ENCODE measurements at regions of chr4 and their contacts with region 1.

Region 1: GRCh38 chr4:38132107-38132673 is 172.0 kb downstream of the PTTG2 start:
- DNase-seq: peak; percentile 30 to 94 (median 66)
- ATAC-seq: peak; percentile 72
- H3K4me3 ChIP-seq: no peak overlapping the region
- H3K4me3 Mint-ChIP-seq: peak overlapping the region; percentile 17
- H3K27ac ChIP-seq: peak overlapping the region; percentile 25 to 66
- H3K27ac Mint-ChIP-seq: peak overlapping the region; percentile 93
- H3K4me1 ChIP-seq: peaks cover 53% of the 10 kb centered on the region
- H3K4me1 Mint-ChIP-seq: peaks cover 54% of the 10 kb centered on the region
- H3K27me3 ChIP-seq: no peaks in the 10 kb centered on the region
- H3K27me3 Mint-ChIP-seq: no peaks in the 10 kb centered on the region
- CTCF ChIP-seq: no peak

Region 2: GRCh38 chr4:38160487-38161207 is 28.5 kb after region 1 on chr4:
- CTCF ChIA-PET with region 1: no interaction called
- POLR2A ChIA-PET with region 1: no interaction called
- intact Hi-C with region 1: loop called in 1 of 2 experiments (anchors 1 kb)
- DNase-seq: peak in 4 of 9 experiments; percentile 32 to 76 (median 50)
- ATAC-seq: peak; percentile 83
- H3K4me3 ChIP-seq: no peak overlapping the region
- H3K4me3 Mint-ChIP-seq: no peak overlapping the region
- H3K27ac ChIP-seq: no peak overlapping the region
- H3K27ac Mint-ChIP-seq: no peak overlapping the region
- H3K4me1 ChIP-seq: peaks cover 2% of the 10 kb centered on the region
- H3K4me1 Mint-ChIP-seq: peaks cover 9% of the 10 kb centered on the region
- H3K27me3 ChIP-seq: no peaks in the 10 kb centered on the region
- H3K27me3 Mint-ChIP-seq: no peaks in the 10 kb centered on the region
- CTCF ChIP-seq: no peak

Region 3: GRCh38 chr4:38310446-38311043 is 178.4 kb after region 1 on chr4:
- CTCF ChIA-PET with region 1: no interaction called
- POLR2A ChIA-PET with region 1: no interaction called
- intact Hi-C with region 1: loop called in 1 of 2 experiments (anchors 5 kb)
- DNase-seq: peak; percentile 19 to 94 (median 65)
- ATAC-seq: peak; percentile 96
- H3K4me3 ChIP-seq: peak overlapping the region in 1 of 2 experiments; percentile 3
- H3K4me3 Mint-ChIP-seq: peak overlapping the region; percentile 54
- H3K27ac ChIP-seq: peak overlapping the region; percentile 6 to 47
- H3K27ac Mint-ChIP-seq: peak overlapping the region; percentile 90
- H3K4me1 ChIP-seq: peaks cover 38% of the 10 kb centered on the region
- H3K4me1 Mint-ChIP-seq: peaks cover 47% of the 10 kb centered on the region
- H3K27me3 ChIP-seq: no peaks in the 10 kb centered on the region
- H3K27me3 Mint-ChIP-seq: no peaks in the 10 kb centered on the region
- CTCF ChIP-seq: no peak

Region 4: GRCh38 chr4:38347251-38347650 is 215.1 kb after region 1 on chr4:
- CTCF ChIA-PET with region 1: no interaction called
- POLR2A ChIA-PET with region 1: no interaction called
- intact Hi-C with region 1: no loop called
- DNase-seq: no peak
- ATAC-seq: no peak
- H3K4me3 ChIP-seq: no peak overlapping the region
- H3K4me3 Mint-ChIP-seq: no peak overlapping the region
- H3K27ac ChIP-seq: no peak overlapping the region
- H3K27ac Mint-ChIP-seq: no peak overlapping the region
- H3K4me1 ChIP-seq: no peaks in the 10 kb centered on the region
- H3K4me1 Mint-ChIP-seq: no peaks in the 10 kb centered on the region
- H3K27me3 ChIP-seq: no peaks in the 10 kb centered on the region
- H3K27me3 Mint-ChIP-seq: no peaks in the 10 kb centered on the region
- CTCF ChIP-seq: no peak

Region 5: DNA sequence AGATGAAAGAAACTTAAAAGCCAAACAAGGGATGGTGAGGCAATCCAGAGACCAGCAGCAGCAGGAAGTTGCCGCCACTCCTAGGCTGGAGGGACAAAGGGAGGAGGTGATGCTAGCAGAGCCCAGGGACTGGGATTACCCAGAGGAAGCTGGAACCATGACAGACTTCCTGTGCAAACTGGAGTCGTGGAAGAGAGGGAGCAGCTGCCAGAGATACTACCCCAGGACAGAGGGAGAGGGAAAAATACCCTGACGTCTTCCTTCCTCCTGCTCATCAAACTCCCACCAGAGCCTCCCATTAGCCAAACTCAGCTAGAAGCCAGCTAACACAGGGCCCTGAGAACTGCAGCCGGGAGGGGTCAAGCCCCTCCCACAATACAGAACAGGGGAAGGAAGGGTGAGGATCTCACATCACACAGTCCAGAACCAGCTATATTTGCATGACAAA is 430.6 kb after region 1 on chr4:
- CTCF ChIA-PET with region 1: no interaction called
- POLR2A ChIA-PET with region 1: no interaction called
- intact Hi-C with region 1: no loop called
- DNase-seq: no peak
- ATAC-seq: no peak
- H3K4me3 ChIP-seq: no peak overlapping the region
- H3K4me3 Mint-ChIP-seq: no peak overlapping the region
- H3K27ac ChIP-seq: no peak overlapping the region
- H3K27ac Mint-ChIP-seq: no peak overlapping the region
- H3K4me1 ChIP-seq: no peaks in the 10 kb centered on the region
- H3K4me1 Mint-ChIP-seq: peaks cover 20% of the 10 kb centered on the region
- H3K27me3 ChIP-seq: no peaks in the 10 kb centered on the region
- H3K27me3 Mint-ChIP-seq: no peaks in the 10 kb centered on the region
- CTCF ChIP-seq: no peak

Region 6: DNA sequence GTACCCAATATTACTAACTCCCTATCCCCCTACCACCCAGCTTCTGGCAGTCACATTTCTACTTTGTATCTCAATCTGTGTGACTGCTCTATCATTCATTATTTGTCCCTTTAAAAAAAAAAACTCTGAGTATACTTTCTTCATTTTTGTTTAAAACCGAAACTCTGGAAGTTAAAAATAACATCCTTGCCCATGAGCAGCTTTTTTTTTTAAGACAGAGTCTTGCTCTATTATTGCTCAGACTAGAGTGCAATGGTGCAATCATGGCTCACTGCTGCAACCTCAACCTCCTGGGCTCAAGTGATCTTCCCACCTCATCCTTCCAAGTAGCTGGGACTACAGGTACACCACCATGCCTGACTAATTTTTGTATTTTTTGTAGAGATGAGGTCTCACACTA is 1581.5 kb after region 1 on chr4:
- CTCF ChIA-PET with region 1: no interaction called
- POLR2A ChIA-PET with region 1: no interaction called
- intact Hi-C with region 1: no loop called
- DNase-seq: no peak
- ATAC-seq: no peak
- H3K4me3 ChIP-seq: no peak overlapping the region
- H3K4me3 Mint-ChIP-seq: no peak overlapping the region
- H3K27ac ChIP-seq: no peak overlapping the region
- H3K27ac Mint-ChIP-seq: peak overlapping the region; percentile 7
- H3K4me1 ChIP-seq: peaks cover 29% of the 10 kb centered on the region
- H3K4me1 Mint-ChIP-seq: peaks cover 64% of the 10 kb centered on the region
- H3K27me3 ChIP-seq: no peaks in the 10 kb centered on the region
- H3K27me3 Mint-ChIP-seq: no peaks in the 10 kb centered on the region
- CTCF ChIP-seq: no peak